Head of caudate nucleus (tissue), 42 donors: ENCODE measurements at regions of chr17 and their contacts with region 1.

Region 1: GRCh38 chr17:48883171-48883570 is 9.4 kb upstream of the ATP5MC1 start:
- DNase-seq: no peak

Region 2: DNA sequence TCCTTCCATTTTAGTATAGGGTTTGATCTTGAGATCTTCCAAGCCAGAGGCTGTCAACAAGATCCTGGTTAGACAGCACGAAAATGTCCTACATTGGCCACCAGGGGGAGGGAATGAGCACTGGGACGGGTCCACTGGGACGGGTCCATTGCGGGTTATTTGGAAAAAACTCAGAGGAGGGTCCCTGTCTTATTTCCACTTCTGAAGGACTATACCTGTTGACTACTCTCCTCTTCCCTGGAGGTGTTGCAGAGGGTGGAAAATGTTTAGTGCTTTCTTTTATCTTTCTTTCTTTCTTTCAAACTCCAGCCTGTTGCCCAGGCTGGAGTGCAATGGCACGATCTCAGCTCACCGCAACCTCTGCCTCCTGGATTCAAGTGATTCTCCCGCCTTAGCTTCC is 68.7 kb before region 1 on chr17:
- intact Hi-C with region 1: loop called (anchors 5 kb)
- DNase-seq: peak in 34 of 42 donors; percentile 9 to 84 (median 40)